Caco-2 (cell line): ENCODE measurements at regions of chr12 and their contacts with region 1.

Region 1: GRCh38 chr12:76559400-76560085 is at the start of gene OSBPL8:
- DNase-seq: peak; percentile 95
- H3K4me3 ChIP-seq: peak within 1 kb of the TSS; percentile 70
- H3K4me3 Mint-ChIP-seq: peak within 1 kb of the TSS; percentile 94
- H3K27ac Mint-ChIP-seq: peak within 1 kb of the TSS; percentile 71
- H3K4me1 ChIP-seq: 0 out of 2 replicates have a peak, but pooled peaks cover 4% of the 10 kb centered on the region
- H3K4me1 Mint-ChIP-seq: no peaks in the 10 kb centered on the region
- H3K27me3 ChIP-seq: no peaks in the 10 kb centered on the region
- H3K27me3 Mint-ChIP-seq: no peaks in the 10 kb centered on the region
- CTCF ChIP-seq: peak in 1 of 2 experiments; percentile 10
- total RNA-seq, gene OSBPL8: 49.3 and 50.0 TPM in 2 replicates

Region 2: GRCh38 chr12:75511116-75512048 is 1048.2 kb before region 1 on chr12 and contains the start of gene KRR1:
- CTCF ChIA-PET with region 1: no interaction called
- POLR2A ChIA-PET with region 1: interaction called, 4 read pairs
- intact Hi-C with region 1: loop called (anchors 1 kb)
- DNase-seq: peak; percentile 92 to 96
- H3K4me3 ChIP-seq: peak within 1 kb of the TSS; percentile 77
- H3K4me3 Mint-ChIP-seq: peak within 1 kb of the TSS; percentile 100
- H3K27ac Mint-ChIP-seq: peak within 1 kb of the TSS; percentile 99
- H3K4me1 ChIP-seq: 0 out of 2 replicates have a peak, but pooled peaks cover 10% of the 10 kb centered on the region
- H3K4me1 Mint-ChIP-seq: no peaks in the 10 kb centered on the region
- H3K27me3 ChIP-seq: no peaks in the 10 kb centered on the region
- H3K27me3 Mint-ChIP-seq: no peaks in the 10 kb centered on the region
- CTCF ChIP-seq: no peak
- total RNA-seq, gene KRR1: 73.0 and 73.2 TPM in 2 replicates

Region 3: DNA sequence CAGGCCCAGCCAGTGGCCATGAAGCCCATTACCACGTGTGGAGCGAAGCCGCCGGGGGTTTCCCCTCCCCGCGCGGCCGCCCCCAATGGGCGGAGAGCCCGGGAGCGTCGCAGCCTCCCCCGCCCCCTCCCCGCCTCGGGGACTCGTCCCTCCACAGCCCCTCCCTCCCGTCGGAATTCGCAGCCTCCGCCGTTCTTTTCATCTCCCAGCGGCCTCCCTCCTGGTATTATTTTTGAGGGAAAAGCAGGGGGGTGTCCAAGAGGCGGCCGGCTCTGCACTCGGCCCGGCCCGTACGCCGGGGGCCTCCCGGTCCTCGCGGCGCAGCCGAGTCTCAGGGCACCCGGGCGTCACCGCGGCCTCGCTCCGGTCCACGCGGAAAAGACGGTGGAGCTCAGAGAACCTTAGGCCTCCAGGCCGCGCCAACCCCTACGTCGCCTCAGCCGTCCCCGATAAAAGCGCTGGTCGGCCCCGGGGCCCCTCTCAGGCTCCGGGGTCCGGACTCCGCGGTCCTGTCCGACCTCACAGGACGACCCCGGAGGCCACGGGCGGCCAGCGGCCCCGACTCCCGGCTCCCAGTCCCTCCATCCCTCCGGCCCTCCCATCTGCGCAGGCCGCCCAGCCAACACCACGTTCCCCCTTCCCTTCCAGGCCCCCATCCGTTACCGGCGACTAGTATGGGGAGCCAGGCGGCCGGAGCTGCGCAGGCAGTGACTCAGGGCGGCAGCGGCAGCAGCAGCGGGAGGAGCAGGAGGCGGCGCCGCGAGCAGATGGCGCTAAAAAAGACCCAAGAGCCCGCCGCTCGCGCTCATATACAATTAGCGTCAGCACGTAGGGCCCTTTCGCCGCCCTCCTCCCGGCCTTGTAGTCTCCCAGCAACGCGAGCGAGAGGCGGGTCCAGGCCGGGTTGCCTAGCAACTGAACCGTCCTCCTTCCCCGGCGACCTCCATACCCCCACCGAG is 475.4 kb before region 1 on chr12 and contains the start of gene NAP1L1:
- CTCF ChIA-PET with region 1: no interaction called
- POLR2A ChIA-PET with region 1: no interaction called
- intact Hi-C with region 1: loop called (anchors 10 kb)
- DNase-seq: peak; percentile 96 to 98
- H3K4me3 ChIP-seq: peak within 1 kb of the TSS; percentile 78
- H3K4me3 Mint-ChIP-seq: peak within 1 kb of the TSS; percentile 96
- H3K27ac Mint-ChIP-seq: peak within 1 kb of the TSS; percentile 99
- H3K4me1 ChIP-seq: peaks cover 15% of the 10 kb centered on the region
- H3K4me1 Mint-ChIP-seq: peaks cover 26% of the 10 kb centered on the region
- H3K27me3 ChIP-seq: no peaks in the 10 kb centered on the region
- H3K27me3 Mint-ChIP-seq: no peaks in the 10 kb centered on the region
- CTCF ChIP-seq: peak in 1 of 2 experiments; percentile 5
- total RNA-seq, gene NAP1L1: 696 and 711 TPM in 2 replicates

Region 4: DNA sequence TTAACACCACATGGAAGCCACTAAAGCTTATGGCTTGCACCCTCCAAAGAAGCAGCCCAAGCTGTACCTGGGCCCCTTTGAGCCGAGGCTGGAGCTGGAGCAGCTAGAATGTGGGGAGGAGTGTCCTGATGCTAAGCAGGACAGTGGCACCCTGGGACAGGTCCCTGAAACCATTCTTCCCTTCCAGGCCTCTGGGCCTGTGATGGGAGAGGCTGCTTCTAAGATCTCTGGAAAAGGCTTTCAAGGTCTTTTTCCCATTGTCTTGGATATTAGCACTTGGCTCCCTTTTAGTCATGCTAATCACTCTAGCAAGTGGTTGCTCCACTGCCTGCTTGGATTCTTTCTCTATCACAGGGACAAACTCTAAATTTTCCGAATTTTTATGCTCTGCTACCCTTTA is 40.8 kb before region 1 on chr12:
- CTCF ChIA-PET with region 1: no interaction called
- POLR2A ChIA-PET with region 1: no interaction called
- intact Hi-C with region 1: loop called (anchors 1 kb)
- DNase-seq: no peak
- H3K4me3 ChIP-seq: no peak overlapping the region
- H3K4me3 Mint-ChIP-seq: no peak overlapping the region
- H3K27ac Mint-ChIP-seq: no peak overlapping the region
- H3K4me1 ChIP-seq: no peaks in the 10 kb centered on the region
- H3K4me1 Mint-ChIP-seq: no peaks in the 10 kb centered on the region
- H3K27me3 ChIP-seq: no peaks in the 10 kb centered on the region
- H3K27me3 Mint-ChIP-seq: no peaks in the 10 kb centered on the region
- CTCF ChIP-seq: no peak

Region 5: GRCh38 chr12:76595056-76595455 is 35.5 kb after region 1 on chr12:
- CTCF ChIA-PET with region 1: no interaction called
- POLR2A ChIA-PET with region 1: no interaction called
- intact Hi-C with region 1: no loop called
- DNase-seq: no peak
- H3K4me3 ChIP-seq: no peak overlapping the region
- H3K4me3 Mint-ChIP-seq: no peak overlapping the region
- H3K27ac Mint-ChIP-seq: no peak overlapping the region
- H3K4me1 ChIP-seq: no peaks in the 10 kb centered on the region
- H3K4me1 Mint-ChIP-seq: no peaks in the 10 kb centered on the region
- H3K27me3 ChIP-seq: no peaks in the 10 kb centered on the region
- H3K27me3 Mint-ChIP-seq: peaks cover 2% of the 10 kb centered on the region
- CTCF ChIP-seq: no peak